HCT116 (cell line): ENCODE measurements at regions of chr13 and their contacts with region 1.

Region 1: DNA sequence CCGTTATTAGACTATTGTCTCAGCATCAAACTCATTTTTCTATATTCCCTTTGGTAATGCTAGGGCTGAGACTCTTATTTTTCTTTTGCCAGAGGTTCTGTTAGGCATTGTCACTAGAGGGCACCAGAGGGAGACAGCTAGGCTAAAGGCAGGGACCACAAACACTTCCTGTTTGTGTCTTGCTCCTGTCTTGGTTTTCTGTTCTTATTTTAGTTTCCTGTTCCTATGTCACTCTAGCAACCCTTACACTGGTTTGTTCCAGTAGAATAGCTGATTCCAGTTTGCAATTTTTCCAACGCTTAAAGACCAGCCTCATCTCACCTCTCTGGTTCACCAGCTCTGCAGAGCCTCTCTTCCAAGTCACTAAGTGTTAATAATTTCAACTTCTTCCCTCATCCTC is 772.0 kb downstream of the DIAPH3 start:
- DNase-seq: peak; percentile 16
- ATAC-seq: peak; percentile 77
- H3K4me3 ChIP-seq: no peak overlapping the region
- H3K27ac ChIP-seq: no peak overlapping the region
- H3K4me1 ChIP-seq: no peaks in the 10 kb centered on the region
- H3K27me3 ChIP-seq: no peaks in the 10 kb centered on the region
- CTCF ChIP-seq: peak; percentile 4 to 73 (median 69); a peak in 4 of 6 replicates
- POLR2A ChIP-seq: no peak
- RAD21 ChIP-seq: peak; percentile 33; the same call in 1 of the 2 replicates

Region 2: GRCh38 chr13:59211606-59212005 is 180.1 kb before region 1 on chr13:
- CTCF ChIA-PET with region 1: no interaction called
- POLR2A ChIA-PET with region 1: no interaction called
- RAD21 ChIA-PET with region 1: no interaction called
- intact Hi-C with region 1: no loop called
- DNase-seq: no peak
- ATAC-seq: no peak
- H3K4me3 ChIP-seq: no peak overlapping the region
- H3K27ac ChIP-seq: no peak overlapping the region
- H3K4me1 ChIP-seq: no peaks in the 10 kb centered on the region
- H3K27me3 ChIP-seq: no peaks in the 10 kb centered on the region
- CTCF ChIP-seq: no peak
- POLR2A ChIP-seq: no peak
- RAD21 ChIP-seq: no peak

Region 3: GRCh38 chr13:59790626-59791025 is 398.9 kb after region 1 on chr13:
- CTCF ChIA-PET with region 1: no interaction called
- POLR2A ChIA-PET with region 1: no interaction called
- RAD21 ChIA-PET with region 1: no interaction called
- intact Hi-C with region 1: no loop called
- DNase-seq: no peak
- ATAC-seq: no peak
- H3K4me3 ChIP-seq: no peak overlapping the region
- H3K27ac ChIP-seq: no peak overlapping the region
- H3K4me1 ChIP-seq: no peaks in the 10 kb centered on the region
- H3K27me3 ChIP-seq: no peaks in the 10 kb centered on the region
- CTCF ChIP-seq: no peak
- POLR2A ChIP-seq: no peak
- RAD21 ChIP-seq: no peak

Region 4: DNA sequence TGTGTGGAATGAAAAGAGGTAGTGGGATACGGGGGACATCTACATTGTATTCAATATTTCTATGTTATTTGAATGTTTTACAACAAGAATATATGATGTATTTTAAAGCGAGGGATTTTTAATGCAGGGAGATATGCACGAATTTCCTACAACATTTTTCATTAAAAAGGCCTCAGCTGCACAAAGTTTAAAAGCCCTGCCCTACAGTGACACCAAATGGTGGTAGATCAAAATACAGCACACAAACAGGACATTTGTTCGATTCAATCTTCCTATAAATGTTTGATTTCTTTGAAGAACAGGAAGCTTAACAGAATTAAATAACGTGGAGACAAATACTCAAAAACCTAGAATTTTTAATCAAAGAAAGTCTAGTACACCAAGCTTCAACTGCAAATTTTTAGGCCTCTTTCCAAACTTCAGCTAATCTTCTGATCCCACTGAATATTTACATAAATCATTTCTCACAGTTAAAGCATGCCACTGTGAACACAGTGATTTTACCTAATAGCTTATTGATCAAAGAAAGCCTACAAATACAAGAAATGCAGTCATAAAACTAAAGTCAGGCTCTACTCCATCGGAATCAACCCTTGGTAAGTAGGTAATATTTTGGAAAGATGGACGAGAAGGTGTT is 514.8 kb after region 1 on chr13:
- CTCF ChIA-PET with region 1: no interaction called
- POLR2A ChIA-PET with region 1: no interaction called
- RAD21 ChIA-PET with region 1: no interaction called
- intact Hi-C with region 1: loop called (anchors 5 kb)
- DNase-seq: peak; percentile 4
- ATAC-seq: peak; percentile 53; the same call in 1 of the 2 replicates
- H3K4me3 ChIP-seq: no peak overlapping the region
- H3K27ac ChIP-seq: no peak overlapping the region
- H3K4me1 ChIP-seq: no peaks in the 10 kb centered on the region
- H3K27me3 ChIP-seq: no peaks in the 10 kb centered on the region
- CTCF ChIP-seq: peak in 2 of 3 experiments; percentile 54 to 57; a peak in 4 of 6 replicates
- POLR2A ChIP-seq: no peak
- RAD21 ChIP-seq: peak; percentile 53

Region 5: DNA sequence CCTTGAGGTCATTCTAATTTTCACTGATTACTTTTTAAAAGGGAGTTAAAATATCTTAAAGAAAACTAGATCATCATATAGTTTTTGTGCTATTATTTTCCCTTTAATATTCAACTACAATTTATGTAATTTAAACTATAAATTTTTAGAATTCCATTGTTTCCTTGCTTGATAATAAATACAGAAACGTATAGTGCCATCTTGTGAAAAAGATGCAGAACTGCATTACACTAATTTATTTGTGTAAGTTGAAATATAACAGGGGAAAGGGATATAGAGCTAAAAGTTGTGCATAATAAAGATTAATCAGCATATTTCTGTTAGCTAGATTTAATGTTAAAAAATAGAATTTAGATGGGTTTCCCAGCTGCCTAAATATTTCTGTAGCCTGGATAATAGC is 943.8 kb after region 1 on chr13:
- CTCF ChIA-PET with region 1: no interaction called
- POLR2A ChIA-PET with region 1: no interaction called
- RAD21 ChIA-PET with region 1: no interaction called
- intact Hi-C with region 1: loop called (anchors 2 kb)
- DNase-seq: no peak
- ATAC-seq: no peak
- H3K4me3 ChIP-seq: no peak overlapping the region
- H3K27ac ChIP-seq: no peak overlapping the region
- H3K4me1 ChIP-seq: no peaks in the 10 kb centered on the region
- H3K27me3 ChIP-seq: peaks cover 19% of the 10 kb centered on the region
- CTCF ChIP-seq: peak; percentile 18 to 58 (median 37); a peak in 4 of 6 replicates
- POLR2A ChIP-seq: no peak
- RAD21 ChIP-seq: peak; percentile 52